Body of pancreas (tissue), 4 donors: ENCODE measurements at regions of chr5 and their contacts with region 1.

Region 1: GRCh38 chr5:138459311-138459933 is 5.9 kb upstream of the EGR1 start:
- DNase-seq: peak in 1 of 4 donors; percentile 61
- ATAC-seq: no peak
- H3K4me3 ChIP-seq: no peak overlapping the region
- H3K27ac ChIP-seq: no peak overlapping the region
- H3K4me1 ChIP-seq: peaks cover 8% of the 10 kb centered on the region
- H3K27me3 ChIP-seq: no peaks in the 10 kb centered on the region
- CTCF ChIP-seq: no peak
- POLR2A ChIP-seq: no peak

Region 2: GRCh38 chr5:138503487-138504270 is 44.3 kb after region 1 on chr5:
- intact Hi-C with region 1: loop called (anchors 5 kb)
- DNase-seq: peak; percentile 38 to 61 (median 55)
- ATAC-seq: peak; percentile 84
- H3K4me3 ChIP-seq: no peak overlapping the region
- H3K27ac ChIP-seq: peak overlapping the region in 1 of 4 donors; percentile 18
- H3K4me1 ChIP-seq: peaks cover 17% of the 10 kb centered on the region
- H3K27me3 ChIP-seq: no peaks in the 10 kb centered on the region
- CTCF ChIP-seq: peak; percentile 47 to 89 (median 85)
- POLR2A ChIP-seq: peak in 1 of 3 donors; percentile 3

Region 3: GRCh38 chr5:138663009-138663408 is 203.6 kb after region 1 on chr5:
- intact Hi-C with region 1: no loop called
- DNase-seq: peak in 1 of 4 donors; percentile 4
- ATAC-seq: no peak
- H3K4me3 ChIP-seq: no peak overlapping the region
- H3K27ac ChIP-seq: no peak overlapping the region
- H3K4me1 ChIP-seq: no peaks in the 10 kb centered on the region
- H3K27me3 ChIP-seq: no peaks in the 10 kb centered on the region
- CTCF ChIP-seq: no peak
- POLR2A ChIP-seq: no peak

Region 4: DNA sequence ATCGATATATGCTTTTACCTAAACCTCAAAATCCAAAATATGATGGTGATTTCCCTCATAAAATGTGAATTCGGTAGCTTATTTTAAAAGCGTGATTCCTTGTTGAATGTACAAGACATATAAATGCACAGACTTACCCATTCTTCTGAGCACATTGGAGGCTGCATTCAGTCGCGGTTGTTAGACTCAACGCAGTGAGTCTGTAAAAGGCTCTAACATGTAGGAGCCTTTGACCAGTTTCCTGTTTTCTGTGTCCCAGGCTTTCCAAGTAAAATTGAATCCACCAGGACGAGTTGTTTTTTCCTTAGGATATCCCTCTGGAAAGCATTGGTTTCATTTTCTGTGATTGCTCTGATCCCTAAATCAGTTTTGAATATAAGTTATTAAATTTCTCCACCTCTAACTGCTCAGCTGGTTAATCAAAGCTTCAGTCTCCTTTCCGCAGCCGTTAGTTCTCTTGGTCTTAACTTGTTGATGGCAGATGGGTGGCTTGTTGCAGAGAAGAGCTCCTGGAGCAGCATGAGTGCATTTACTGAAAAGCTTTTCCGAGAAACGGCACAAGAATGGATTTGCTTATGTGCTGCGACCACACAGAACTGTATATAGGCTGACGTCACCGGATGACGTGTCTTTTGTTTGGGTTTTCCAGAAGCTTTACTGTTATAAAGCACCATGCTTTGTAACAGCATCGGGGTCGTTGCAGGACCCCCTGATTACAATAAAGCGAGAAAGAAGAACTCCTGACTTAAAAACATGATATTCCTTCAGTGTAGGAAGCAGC is 415.5 kb after region 1 on chr5 and contains the start of gene LRRTM2:
- intact Hi-C with region 1: no loop called
- DNase-seq: no peak
- ATAC-seq: no peak
- H3K4me3 ChIP-seq: no peak within 1 kb of the TSS
- H3K27ac ChIP-seq: no peak within 1 kb of the TSS
- H3K4me1 ChIP-seq: peaks cover 25% of the 10 kb centered on the region
- H3K27me3 ChIP-seq: no peaks in the 10 kb centered on the region
- CTCF ChIP-seq: no peak
- POLR2A ChIP-seq: no peak
- total RNA-seq, gene LRRTM2: 0.52 to 0.66 TPM